SK-N-SH (cell line): ENCODE measurements at regions of chr2 and their contacts with region 1.

Region 1: GRCh38 chr2:241616168-241617125 is 20.5 kb downstream of the THAP4 start:
- DNase-seq: no peak
- H3K4me3 ChIP-seq: no peak overlapping the region; a peak in 1 of 4 replicates
- H3K27ac ChIP-seq: no peak overlapping the region
- H3K4me1 ChIP-seq: peaks cover 0 to 19% of the 10 kb centered on the region in 2 experiments; a peak in 2 of 4 replicates
- H3K27me3 ChIP-seq: no peaks in the 10 kb centered on the region
- CTCF ChIP-seq: no peak
- EP300 ChIP-seq: no peak
- RAD21 ChIP-seq: no peak

Region 2: GRCh38 chr2:241598480-241598879 is 18.0 kb before region 1 on chr2:
- CTCF ChIA-PET with region 1: interaction called, 10 read pairs
- POLR2A ChIA-PET with region 1: no interaction called
- DNase-seq: peak; percentile 48
- H3K4me3 ChIP-seq: no peak overlapping the region; a peak in 1 of 4 replicates
- H3K27ac ChIP-seq: no peak overlapping the region
- H3K4me1 ChIP-seq: no peaks in the 10 kb centered on the region
- H3K27me3 ChIP-seq: no peaks in the 10 kb centered on the region
- CTCF ChIP-seq: no peak; the same call in 1 of the 2 replicates
- EP300 ChIP-seq: no peak
- RAD21 ChIP-seq: peak; percentile 69

Region 3: GRCh38 chr2:241627675-241628074 is 11.2 kb after region 1 on chr2:
- CTCF ChIA-PET with region 1: no interaction called
- POLR2A ChIA-PET with region 1: no interaction called
- DNase-seq: no peak
- H3K4me3 ChIP-seq: no peak overlapping the region
- H3K27ac ChIP-seq: no peak overlapping the region
- H3K4me1 ChIP-seq: no peaks in the 10 kb centered on the region
- H3K27me3 ChIP-seq: no peaks in the 10 kb centered on the region
- CTCF ChIP-seq: no peak
- EP300 ChIP-seq: no peak
- RAD21 ChIP-seq: no peak